HCT116 (cell line): ENCODE measurements at regions of chr12 and their contacts with region 1.

Region 1: GRCh38 chr12:9741726-9742125 is 8.8 kb upstream of the CLECL1 start:
- DNase-seq: no peak
- ATAC-seq: no peak
- H3K4me3 ChIP-seq: no peak overlapping the region
- H3K27ac ChIP-seq: no peak overlapping the region
- H3K4me1 ChIP-seq: peaks cover 0 to 5% of the 10 kb centered on the region in 2 experiments; a peak in 1 of 4 replicates
- H3K27me3 ChIP-seq: peaks cover 17% of the 10 kb centered on the region
- CTCF ChIP-seq: no peak
- POLR2A ChIP-seq: no peak
- RAD21 ChIP-seq: no peak

Region 2: DNA sequence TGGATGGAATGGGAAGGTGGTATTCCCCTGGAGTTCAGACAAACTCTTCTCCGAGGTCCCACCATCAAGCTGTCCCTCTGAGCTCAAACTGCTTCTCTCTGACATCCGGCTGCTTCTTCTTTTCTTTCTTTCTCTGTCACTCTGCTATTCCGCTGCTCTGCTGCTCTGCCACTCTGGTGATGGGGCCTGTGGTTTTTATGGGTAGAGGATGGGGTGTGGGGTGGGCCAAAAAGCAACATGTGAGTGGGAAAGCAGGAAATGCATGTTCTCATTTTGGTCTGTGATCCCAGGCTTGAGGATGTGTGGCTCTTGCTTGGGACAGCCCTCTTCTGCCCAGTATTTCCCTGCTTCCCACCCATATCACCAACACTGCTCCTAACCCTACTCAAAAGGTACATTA is 39.5 kb before region 1 on chr12:
- CTCF ChIA-PET with region 1: no interaction called
- POLR2A ChIA-PET with region 1: no interaction called
- RAD21 ChIA-PET with region 1: no interaction called
- intact Hi-C with region 1: no loop called
- DNase-seq: no peak
- ATAC-seq: no peak
- H3K4me3 ChIP-seq: no peak overlapping the region
- H3K27ac ChIP-seq: no peak overlapping the region
- H3K4me1 ChIP-seq: no peaks in the 10 kb centered on the region
- H3K27me3 ChIP-seq: no peaks in the 10 kb centered on the region
- CTCF ChIP-seq: no peak
- POLR2A ChIP-seq: no peak
- RAD21 ChIP-seq: no peak

Region 3: DNA sequence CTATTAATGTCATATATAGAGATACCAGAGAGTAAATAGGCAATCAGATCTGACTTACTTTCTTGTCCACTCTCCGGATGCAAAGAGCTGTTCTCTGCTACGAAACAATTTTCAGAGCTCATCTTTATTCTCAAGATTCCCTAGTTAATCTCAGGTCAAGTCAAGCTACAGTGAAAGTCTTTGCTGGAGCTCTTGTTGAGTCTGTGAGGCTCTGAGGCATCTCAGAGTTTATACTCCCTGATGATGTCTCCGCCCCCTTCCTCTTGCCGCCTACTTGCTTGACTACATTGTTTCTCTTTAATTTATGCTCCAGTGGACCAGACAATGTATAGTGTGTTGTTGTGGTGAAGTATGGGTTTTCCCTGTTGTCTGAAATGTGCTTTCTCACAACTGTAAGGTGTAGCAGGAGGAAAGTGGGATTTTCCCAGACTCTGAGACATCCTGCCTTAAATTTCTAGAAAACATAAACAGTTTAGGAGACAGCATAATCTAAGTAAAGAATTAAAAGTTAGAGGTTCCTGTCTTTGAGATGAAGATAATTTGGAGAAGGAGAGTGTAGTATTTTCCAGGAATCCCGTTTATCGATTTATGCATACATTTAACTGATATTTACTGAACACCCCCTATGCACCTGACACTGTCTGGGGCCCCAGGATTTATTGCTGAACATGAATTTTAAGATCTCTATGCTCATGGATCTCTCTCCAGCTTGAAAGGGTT is 19.1 kb after region 1 on chr12 and contains the start of gene CD69:
- CTCF ChIA-PET with region 1: interaction called, 10 read pairs
- POLR2A ChIA-PET with region 1: no interaction called
- RAD21 ChIA-PET with region 1: no interaction called
- intact Hi-C with region 1: no loop called
- DNase-seq: no peak
- ATAC-seq: no peak
- H3K4me3 ChIP-seq: no peak within 1 kb of the TSS
- H3K27ac ChIP-seq: no peak within 1 kb of the TSS
- H3K4me1 ChIP-seq: no peaks in the 10 kb centered on the region
- H3K27me3 ChIP-seq: peaks cover 68% of the 10 kb centered on the region
- CTCF ChIP-seq: no peak
- POLR2A ChIP-seq: no peak
- RAD21 ChIP-seq: no peak
- total RNA-seq, gene CD69: not detected

Region 4: DNA sequence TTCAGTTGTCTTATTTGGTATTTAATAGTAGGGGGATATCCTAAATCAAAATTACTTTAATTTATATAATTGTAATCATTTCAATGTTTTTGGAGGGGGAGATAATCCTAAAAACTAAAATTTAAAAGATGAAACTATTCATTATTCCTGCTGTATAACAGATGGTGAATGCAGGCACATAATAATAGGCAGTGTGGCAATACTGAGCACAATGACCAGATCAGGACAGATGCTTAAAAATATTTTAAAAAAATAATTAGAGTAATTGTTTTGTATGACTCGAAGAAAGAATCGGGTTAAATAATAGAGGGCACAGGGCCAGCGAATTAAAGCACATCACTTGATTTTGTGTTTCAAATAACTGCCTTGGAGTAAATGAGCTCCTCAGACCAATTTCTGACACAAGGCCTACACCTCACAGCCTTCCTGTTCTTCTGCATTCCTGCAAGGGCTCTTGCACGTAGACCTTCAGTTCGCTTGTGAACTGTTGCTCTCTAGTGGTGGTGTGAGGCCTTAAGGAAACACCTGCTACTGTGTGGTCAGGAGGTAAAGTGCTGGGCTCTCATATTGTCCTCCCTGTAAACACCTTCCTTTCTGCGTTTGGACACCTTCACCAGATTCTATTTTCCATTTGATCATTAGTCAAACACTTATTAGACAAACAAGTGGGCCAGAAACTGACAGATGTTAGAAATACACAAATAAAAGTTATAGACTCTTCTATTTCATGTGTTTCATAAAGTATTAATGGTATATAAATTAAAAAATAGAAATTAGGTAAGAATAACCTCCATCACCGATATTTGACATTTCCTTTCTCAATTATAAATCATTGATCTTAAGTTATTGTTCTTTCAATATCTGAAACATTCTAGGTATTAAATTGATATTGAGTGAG is 56.2 kb after region 1 on chr12:
- CTCF ChIA-PET with region 1: interaction called, 13 read pairs
- POLR2A ChIA-PET with region 1: no interaction called
- RAD21 ChIA-PET with region 1: no interaction called
- intact Hi-C with region 1: no loop called
- DNase-seq: peak; percentile 71
- ATAC-seq: peak; percentile 93
- H3K4me3 ChIP-seq: no peak overlapping the region
- H3K27ac ChIP-seq: no peak overlapping the region
- H3K4me1 ChIP-seq: no peaks in the 10 kb centered on the region
- H3K27me3 ChIP-seq: peaks cover 36% of the 10 kb centered on the region
- CTCF ChIP-seq: peak; percentile 50 to 57 (median 53)
- POLR2A ChIP-seq: no peak
- RAD21 ChIP-seq: peak; percentile 77

Region 5: GRCh38 chr12:10067942-10068341 is 326.2 kb after region 1 on chr12:
- CTCF ChIA-PET with region 1: no interaction called
- POLR2A ChIA-PET with region 1: no interaction called
- RAD21 ChIA-PET with region 1: no interaction called
- intact Hi-C with region 1: no loop called
- DNase-seq: no peak
- ATAC-seq: no peak
- H3K4me3 ChIP-seq: no peak overlapping the region
- H3K27ac ChIP-seq: no peak overlapping the region
- H3K4me1 ChIP-seq: no peaks in the 10 kb centered on the region
- H3K27me3 ChIP-seq: peaks cover 85% of the 10 kb centered on the region
- CTCF ChIP-seq: no peak
- POLR2A ChIP-seq: no peak
- RAD21 ChIP-seq: no peak